HCT116 (cell line): ENCODE measurements at regions of chr22 and their contacts with region 1.

Region 1: GRCh38 chr22:30253205-30253852 is 6.8 kb upstream of the LIF start:
- DNase-seq: no peak
- ATAC-seq: peak; percentile 21
- H3K4me3 ChIP-seq: peak overlapping the region; percentile 17 to 42
- H3K27ac ChIP-seq: peak overlapping the region; percentile 90
- H3K4me1 ChIP-seq: peaks cover 69 to 100% of the 10 kb centered on the region in 2 experiments
- H3K27me3 ChIP-seq: no peaks in the 10 kb centered on the region
- CTCF ChIP-seq: no peak
- POLR2A ChIP-seq: no peak
- RAD21 ChIP-seq: no peak

Region 2: DNA sequence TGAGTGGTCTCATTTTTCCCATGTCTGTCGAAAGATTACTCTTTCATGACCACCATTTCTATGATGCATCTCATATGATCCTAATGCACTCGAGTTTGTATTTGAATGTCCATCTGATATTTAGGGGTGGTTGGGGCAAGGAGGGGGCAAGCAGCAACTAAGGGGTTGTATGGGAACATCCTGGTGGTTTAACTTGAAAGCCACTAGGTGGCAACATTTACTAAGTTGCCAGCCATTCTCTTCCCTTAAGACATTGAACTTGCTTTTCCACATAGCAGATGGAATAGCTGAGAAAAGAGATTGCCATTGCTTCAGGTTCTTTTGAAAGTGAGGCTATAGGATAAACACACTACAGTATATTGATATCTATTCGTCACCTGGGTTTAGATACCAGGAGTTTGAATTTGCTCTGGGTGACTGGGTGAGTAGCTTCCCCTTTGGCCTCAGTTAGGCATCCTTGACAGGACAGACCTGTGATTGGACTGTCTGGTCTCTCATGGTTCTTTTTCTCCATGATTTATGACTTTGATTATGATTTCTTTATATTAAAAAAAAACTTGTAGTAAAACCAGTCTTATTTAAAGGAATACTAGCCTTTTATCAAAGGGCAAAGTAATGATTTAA is 617.5 kb before region 1 on chr22:
- CTCF ChIA-PET with region 1: no interaction called
- POLR2A ChIA-PET with region 1: no interaction called
- RAD21 ChIA-PET with region 1: no interaction called
- intact Hi-C with region 1: loop called (anchors 2 kb)
- DNase-seq: peak; percentile 34
- ATAC-seq: peak; percentile 93
- H3K4me3 ChIP-seq: no peak overlapping the region
- H3K27ac ChIP-seq: no peak overlapping the region
- H3K4me1 ChIP-seq: peaks cover 0 to 3% of the 10 kb centered on the region in 2 experiments; a peak in 1 of 4 replicates
- H3K27me3 ChIP-seq: no peaks in the 10 kb centered on the region
- CTCF ChIP-seq: peak; percentile 73
- POLR2A ChIP-seq: no peak
- RAD21 ChIP-seq: peak; percentile 78

Region 3: GRCh38 chr22:30038219-30038618 is 215.1 kb before region 1 on chr22:
- CTCF ChIA-PET with region 1: no interaction called
- POLR2A ChIA-PET with region 1: no interaction called
- RAD21 ChIA-PET with region 1: no interaction called
- intact Hi-C with region 1: no loop called
- DNase-seq: no peak
- ATAC-seq: no peak
- H3K4me3 ChIP-seq: no peak overlapping the region
- H3K27ac ChIP-seq: no peak overlapping the region
- H3K4me1 ChIP-seq: peaks cover 6 to 20% of the 10 kb centered on the region in 2 experiments
- H3K27me3 ChIP-seq: no peaks in the 10 kb centered on the region
- CTCF ChIP-seq: no peak
- POLR2A ChIP-seq: no peak
- RAD21 ChIP-seq: no peak

Region 4: DNA sequence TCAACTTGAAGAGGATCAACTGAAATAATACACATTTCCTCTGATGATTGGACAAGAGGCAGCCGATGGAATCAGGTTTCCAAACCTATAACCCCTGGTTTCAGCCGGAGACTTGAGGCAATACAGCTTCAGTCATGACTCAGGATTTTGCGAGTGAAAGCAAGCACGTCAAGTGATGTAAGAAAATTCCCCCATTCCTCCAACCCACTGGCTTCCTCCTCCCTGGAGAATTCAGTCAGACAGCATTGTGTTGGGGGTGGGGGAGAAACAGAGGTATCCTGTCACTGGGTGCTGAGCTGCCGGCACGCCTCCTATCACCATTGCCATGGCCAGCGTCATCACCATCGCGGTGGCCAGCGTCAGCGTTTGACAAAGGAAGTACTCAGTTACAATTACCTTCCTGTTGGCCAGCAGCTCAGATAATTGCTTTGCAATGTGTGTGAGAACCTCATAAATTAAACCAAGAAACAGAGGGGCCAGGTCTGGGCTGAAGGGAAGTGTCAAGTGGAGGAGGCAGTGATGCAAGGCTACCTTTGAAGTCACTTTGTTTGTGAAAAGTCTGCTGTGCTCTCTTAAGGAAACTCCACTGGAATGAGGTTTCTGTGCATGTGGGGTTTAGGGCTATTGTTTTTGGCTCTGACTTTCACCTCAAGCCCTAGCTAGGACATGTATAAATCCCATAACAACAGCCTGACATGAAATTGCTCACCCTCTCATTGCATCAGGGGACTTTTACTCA is 57.0 kb before region 1 on chr22:
- CTCF ChIA-PET with region 1: no interaction called
- POLR2A ChIA-PET with region 1: interaction called, 5 read pairs
- RAD21 ChIA-PET with region 1: interaction called in 1 of 2 experiments, 4 read pairs
- intact Hi-C with region 1: loop called (anchors 5 kb)
- DNase-seq: peak; percentile 91
- ATAC-seq: peak; percentile 91
- H3K4me3 ChIP-seq: peak overlapping the region; percentile 8 to 26
- H3K27ac ChIP-seq: peak overlapping the region; percentile 66
- H3K4me1 ChIP-seq: peaks cover 25 to 59% of the 10 kb centered on the region in 2 experiments
- H3K27me3 ChIP-seq: no peaks in the 10 kb centered on the region
- CTCF ChIP-seq: no peak
- POLR2A ChIP-seq: no peak
- RAD21 ChIP-seq: no peak; the same call in 1 of the 2 replicates

Region 5: GRCh38 chr22:30205281-30206115 is 47.8 kb before region 1 on chr22:
- CTCF ChIA-PET with region 1: interaction called, 13 read pairs
- POLR2A ChIA-PET with region 1: interaction called, 22 read pairs
- RAD21 ChIA-PET with region 1: interaction called, 4 to 5 read pairs
- intact Hi-C with region 1: loop called (anchors 1 kb)
- DNase-seq: no peak
- ATAC-seq: no peak
- H3K4me3 ChIP-seq: peak overlapping the region; percentile 28 to 30; a peak in 3 of 4 replicates
- H3K27ac ChIP-seq: peak overlapping the region; percentile 96
- H3K4me1 ChIP-seq: peaks cover 59 to 84% of the 10 kb centered on the region in 2 experiments
- H3K27me3 ChIP-seq: no peaks in the 10 kb centered on the region
- CTCF ChIP-seq: no peak
- POLR2A ChIP-seq: no peak
- RAD21 ChIP-seq: no peak

Region 6: GRCh38 chr22:30212363-30212995 is 40.9 kb before region 1 on chr22:
- CTCF ChIA-PET with region 1: interaction called, 13 read pairs
- POLR2A ChIA-PET with region 1: interaction called, 22 read pairs
- RAD21 ChIA-PET with region 1: interaction called, 4 to 5 read pairs
- intact Hi-C with region 1: loop called (anchors 1 kb)
- DNase-seq: peak; percentile 93
- ATAC-seq: peak; percentile 63
- H3K4me3 ChIP-seq: peak overlapping the region in 1 of 2 experiments; percentile 29; a peak in 2 of 4 replicates
- H3K27ac ChIP-seq: peak overlapping the region; percentile 96
- H3K4me1 ChIP-seq: peaks cover 66 to 92% of the 10 kb centered on the region in 2 experiments
- H3K27me3 ChIP-seq: no peaks in the 10 kb centered on the region
- CTCF ChIP-seq: 0 out of 6 replicates have a peak, but pooled peaks of 1 of the 3 experiments have one; percentile 19
- POLR2A ChIP-seq: no peak
- RAD21 ChIP-seq: no peak

Region 7: GRCh38 chr22:30235687-30236170 is 17.6 kb before region 1 on chr22:
- CTCF ChIA-PET with region 1: interaction called, 10 read pairs
- POLR2A ChIA-PET with region 1: interaction called, 13 read pairs
- RAD21 ChIA-PET with region 1: interaction called, 3 read pairs
- intact Hi-C with region 1: no loop called
- DNase-seq: no peak
- ATAC-seq: peak; percentile 73
- H3K4me3 ChIP-seq: peak overlapping the region in 1 of 2 experiments; percentile 30; a peak in 2 of 4 replicates
- H3K27ac ChIP-seq: peak overlapping the region; percentile 53
- H3K4me1 ChIP-seq: peaks cover 43 to 86% of the 10 kb centered on the region in 2 experiments
- H3K27me3 ChIP-seq: no peaks in the 10 kb centered on the region
- CTCF ChIP-seq: no peak
- POLR2A ChIP-seq: no peak
- RAD21 ChIP-seq: no peak